ENCODE measurements at regions of chr20 and their contacts with region 1.

Region 1: GRCh38 chr20:4607287-4607713 is 114.4 kb upstream of the PRND start:
- DNase-seq: peak; percentile 49 to 52
- H3K4me3 ChIP-seq: no peak overlapping the region
- H3K27ac ChIP-seq: no peak overlapping the region
- H3K4me1 ChIP-seq: peaks cover 4 to 6% of the 10 kb centered on the region in 2 donors
- H3K27me3 ChIP-seq: no peaks in the 10 kb centered on the region
- CTCF ChIP-seq: peak; percentile 91 to 97 (median 94)
- POLR2A ChIP-seq: no peak

Region 2: DNA sequence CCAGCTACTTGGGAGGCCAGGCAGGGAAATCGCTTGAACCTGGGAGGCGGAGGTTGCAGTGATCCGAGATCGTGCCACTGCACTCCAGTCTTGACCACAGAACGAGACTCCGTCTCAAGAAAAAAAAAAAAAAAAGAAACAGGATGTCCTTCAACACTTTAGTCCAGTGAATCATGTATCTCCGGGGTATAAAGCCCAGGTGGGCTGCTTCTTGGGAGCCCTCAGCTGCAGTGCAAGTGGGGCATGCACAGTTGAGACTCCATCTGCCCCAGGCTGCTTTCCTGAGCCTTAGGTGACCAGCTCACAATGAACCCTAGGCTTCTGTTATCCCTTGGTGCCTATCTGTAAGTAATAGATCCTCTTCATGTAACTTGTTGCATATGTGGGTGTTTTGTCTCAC is 404.9 kb before region 1 on chr20:
- intact Hi-C with region 1: no loop called
- DNase-seq: no peak
- H3K4me3 ChIP-seq: no peak overlapping the region
- H3K27ac ChIP-seq: no peak overlapping the region
- H3K4me1 ChIP-seq: no peaks in the 10 kb centered on the region
- H3K27me3 ChIP-seq: no peaks in the 10 kb centered on the region
- CTCF ChIP-seq: no peak
- POLR2A ChIP-seq: no peak

Region 3: GRCh38 chr20:4483486-4483885 is 123.8 kb before region 1 on chr20:
- intact Hi-C with region 1: no loop called
- DNase-seq: no peak
- H3K4me3 ChIP-seq: no peak overlapping the region
- H3K27ac ChIP-seq: no peak overlapping the region
- H3K4me1 ChIP-seq: no peaks in the 10 kb centered on the region
- H3K27me3 ChIP-seq: no peaks in the 10 kb centered on the region
- CTCF ChIP-seq: no peak
- POLR2A ChIP-seq: no peak

Region 4: DNA sequence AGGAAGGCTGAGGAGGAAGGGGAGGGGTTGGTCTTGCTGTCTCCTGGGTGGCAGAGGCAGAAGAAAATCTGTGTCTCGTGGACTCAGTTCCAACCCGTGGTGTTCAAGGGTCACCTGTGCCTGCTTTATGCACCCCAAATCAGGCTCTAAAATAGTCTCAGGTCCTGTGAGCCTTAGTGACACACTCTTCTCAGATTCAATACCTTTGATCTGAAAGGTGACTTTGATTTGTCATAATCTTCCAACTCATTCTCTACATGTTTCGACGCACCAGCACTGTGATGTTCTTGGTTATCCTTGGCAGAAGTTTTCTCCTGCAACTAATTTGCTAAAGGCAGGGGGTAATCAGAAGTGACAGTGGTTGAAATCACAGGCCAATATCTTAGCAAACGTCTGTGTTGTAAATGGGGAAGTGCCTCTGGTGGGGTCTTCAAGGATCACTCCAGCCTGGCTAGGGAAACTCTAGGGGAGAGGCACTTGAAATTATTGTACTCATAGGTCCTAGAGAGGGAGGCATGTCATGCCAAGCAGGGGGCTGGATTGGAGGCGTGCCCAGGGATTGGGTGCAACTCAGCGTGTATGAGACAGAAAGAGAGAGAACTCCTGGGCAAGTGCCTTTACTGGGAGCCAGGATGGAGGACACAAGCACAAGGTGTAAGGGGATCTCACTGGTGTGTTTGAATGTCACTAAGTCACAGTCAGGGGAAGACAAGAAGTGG is 95.4 kb after region 1 on chr20:
- intact Hi-C with region 1: no loop called
- DNase-seq: peak; percentile 73 to 77
- H3K4me3 ChIP-seq: no peak overlapping the region
- H3K27ac ChIP-seq: peak overlapping the region in 1 of 3 donors; percentile 84
- H3K4me1 ChIP-seq: peaks cover 11 to 29% of the 10 kb centered on the region in 2 donors
- H3K27me3 ChIP-seq: no peaks in the 10 kb centered on the region
- CTCF ChIP-seq: no peak
- POLR2A ChIP-seq: no peak

Region 5: DNA sequence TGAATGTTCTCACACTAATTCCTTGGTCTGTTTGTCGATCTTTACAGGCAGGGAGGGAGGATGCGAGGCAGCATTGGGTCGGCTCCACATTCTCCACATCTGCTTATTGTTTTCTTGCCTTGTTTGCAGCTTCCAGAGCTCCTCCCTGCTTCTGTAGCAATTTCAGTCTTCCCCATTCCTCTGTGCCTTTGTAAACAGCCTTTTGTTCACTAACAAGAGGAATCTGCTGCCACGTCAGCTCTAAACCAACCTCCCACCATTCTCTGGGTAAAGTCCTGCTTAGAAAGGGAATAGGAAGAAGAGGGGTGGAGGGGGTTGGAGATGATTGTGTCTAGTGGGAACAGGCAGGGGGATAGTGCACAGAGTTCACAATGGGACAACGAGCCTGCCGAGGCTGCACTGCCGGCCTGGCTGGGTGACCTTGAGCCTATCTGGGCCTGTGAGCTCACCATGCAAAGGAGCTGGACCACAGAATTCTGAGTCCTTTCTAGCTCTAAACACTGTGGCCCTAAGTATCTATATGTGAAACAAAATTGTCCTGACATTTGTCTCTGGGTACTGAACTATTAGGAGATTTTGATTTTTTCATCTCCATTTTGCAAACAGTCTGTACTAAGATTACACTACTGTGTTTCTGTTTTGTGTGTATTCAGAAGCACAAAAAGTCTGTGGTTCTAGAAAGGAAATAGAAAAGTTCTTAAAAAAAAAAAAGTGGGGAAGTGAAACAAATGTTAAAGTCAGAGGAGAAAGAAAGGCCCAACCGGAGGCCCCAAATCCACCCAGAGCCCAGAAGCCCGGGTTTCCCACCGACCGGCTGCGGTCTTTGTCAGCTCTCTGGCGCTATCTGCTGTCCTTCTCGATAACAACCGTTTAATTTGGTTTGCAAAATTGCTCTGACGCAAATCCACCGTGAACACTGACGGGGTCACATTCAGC is 113.0 kb after region 1 on chr20:
- intact Hi-C with region 1: loop called (anchors 2 kb)
- DNase-seq: peak; percentile 64 to 68
- H3K4me3 ChIP-seq: no peak overlapping the region
- H3K27ac ChIP-seq: no peak overlapping the region
- H3K4me1 ChIP-seq: peaks cover 0 to 4% of the 10 kb centered on the region in 2 donors
- H3K27me3 ChIP-seq: no peaks in the 10 kb centered on the region
- CTCF ChIP-seq: peak; percentile 44 to 91 (median 67)
- POLR2A ChIP-seq: no peak